ENCODE measurements at regions of chr7 and their contacts with region 1.

Region 1: GRCh38 chr7:22438994-22439393 is 61.0 kb downstream of the STEAP1B start:
- DNase-seq: peak; percentile 45
- ATAC-seq: peak; percentile 75
- H3K4me3 ChIP-seq: no peak overlapping the region
- H3K4me3 Mint-ChIP-seq: no peak overlapping the region
- H3K27ac ChIP-seq: peak overlapping the region; percentile 11 to 30
- H3K27ac Mint-ChIP-seq: peak overlapping the region; percentile 66
- H3K4me1 ChIP-seq: peaks cover 25 to 36% of the 10 kb centered on the region in 2 donors
- H3K4me1 Mint-ChIP-seq: peaks cover 59% of the 10 kb centered on the region
- H3K27me3 ChIP-seq: no peaks in the 10 kb centered on the region
- H3K27me3 Mint-ChIP-seq: no peaks in the 10 kb centered on the region
- CTCF ChIP-seq: no peak

Region 2: GRCh38 chr7:22025968-22026367 is 413.0 kb before region 1 on chr7:
- CTCF ChIA-PET with region 1: no interaction called
- POLR2A ChIA-PET with region 1: no interaction called
- intact Hi-C with region 1: no loop called
- DNase-seq: no peak
- ATAC-seq: no peak
- H3K4me3 ChIP-seq: no peak overlapping the region
- H3K4me3 Mint-ChIP-seq: no peak overlapping the region
- H3K27ac ChIP-seq: no peak overlapping the region
- H3K27ac Mint-ChIP-seq: no peak overlapping the region
- H3K4me1 ChIP-seq: no peaks in the 10 kb centered on the region
- H3K4me1 Mint-ChIP-seq: no peaks in the 10 kb centered on the region
- H3K27me3 ChIP-seq: peaks cover 0 to 2% (median 0%) of the 10 kb centered on the region in 4 experiments
- H3K27me3 Mint-ChIP-seq: peaks cover 12% of the 10 kb centered on the region
- CTCF ChIP-seq: no peak

Region 3: GRCh38 chr7:22278660-22279059 is 160.3 kb before region 1 on chr7:
- CTCF ChIA-PET with region 1: no interaction called
- POLR2A ChIA-PET with region 1: no interaction called
- intact Hi-C with region 1: no loop called
- DNase-seq: no peak
- ATAC-seq: no peak
- H3K4me3 ChIP-seq: no peak overlapping the region
- H3K4me3 Mint-ChIP-seq: no peak overlapping the region
- H3K27ac ChIP-seq: no peak overlapping the region
- H3K27ac Mint-ChIP-seq: no peak overlapping the region
- H3K4me1 ChIP-seq: no peaks in the 10 kb centered on the region
- H3K4me1 Mint-ChIP-seq: no peaks in the 10 kb centered on the region
- H3K27me3 ChIP-seq: no peaks in the 10 kb centered on the region
- H3K27me3 Mint-ChIP-seq: no peaks in the 10 kb centered on the region
- CTCF ChIP-seq: no peak

Region 4: DNA sequence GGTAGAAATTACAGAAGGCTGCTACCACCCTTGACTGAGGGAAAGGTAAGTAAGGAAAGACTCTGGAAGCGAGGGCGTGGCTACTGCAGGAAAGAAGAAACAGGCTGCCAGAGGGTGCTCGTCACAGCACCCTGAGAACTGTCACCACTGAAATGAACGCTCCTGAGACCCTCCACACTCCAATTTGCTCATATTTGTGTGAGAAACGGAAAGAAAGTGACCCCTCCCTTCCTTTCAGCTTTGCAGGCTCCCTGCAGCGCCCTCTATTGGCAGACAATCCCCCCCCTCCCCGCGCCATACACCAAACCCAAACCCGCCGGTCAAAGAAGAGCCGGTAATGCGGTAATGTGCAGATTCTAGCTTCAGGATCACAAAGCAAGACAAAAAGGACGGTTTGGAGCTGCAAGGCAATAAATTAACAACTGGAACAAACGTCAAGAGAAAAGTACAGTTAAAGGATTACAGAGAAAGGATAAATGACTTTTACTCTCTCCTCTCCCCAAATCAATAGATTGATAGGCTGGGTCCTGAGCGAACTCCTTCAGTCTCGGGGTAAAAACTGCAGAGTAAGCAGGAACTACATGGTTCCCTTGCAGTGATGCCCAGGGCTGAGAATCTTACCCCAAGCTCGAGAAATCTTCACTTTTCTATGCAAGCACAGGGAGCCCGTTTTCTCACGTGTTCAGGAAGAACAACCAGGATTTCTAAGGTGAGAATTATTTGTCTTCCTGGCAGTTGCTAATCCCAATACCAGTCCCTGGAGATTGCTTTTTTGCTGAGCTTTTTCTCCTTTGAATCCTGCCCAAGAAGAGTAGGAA is 13.4 kb after region 1 on chr7:
- CTCF ChIA-PET with region 1: interaction called, 13 read pairs
- POLR2A ChIA-PET with region 1: no interaction called
- intact Hi-C with region 1: no loop called
- DNase-seq: peak; percentile 70
- ATAC-seq: peak; percentile 29
- H3K4me3 ChIP-seq: peak overlapping the region in 2 of 5 experiments; percentile 24 to 45
- H3K4me3 Mint-ChIP-seq: peak overlapping the region; percentile 61
- H3K27ac ChIP-seq: no peak overlapping the region
- H3K27ac Mint-ChIP-seq: no peak overlapping the region
- H3K4me1 ChIP-seq: peaks cover 17 to 22% of the 10 kb centered on the region in 2 donors
- H3K4me1 Mint-ChIP-seq: peaks cover 27% of the 10 kb centered on the region
- H3K27me3 ChIP-seq: peaks cover 0 to 7% (median 0%) of the 10 kb centered on the region in 4 experiments
- H3K27me3 Mint-ChIP-seq: peaks cover 4% of the 10 kb centered on the region
- CTCF ChIP-seq: peak; percentile 73

Region 5: DNA sequence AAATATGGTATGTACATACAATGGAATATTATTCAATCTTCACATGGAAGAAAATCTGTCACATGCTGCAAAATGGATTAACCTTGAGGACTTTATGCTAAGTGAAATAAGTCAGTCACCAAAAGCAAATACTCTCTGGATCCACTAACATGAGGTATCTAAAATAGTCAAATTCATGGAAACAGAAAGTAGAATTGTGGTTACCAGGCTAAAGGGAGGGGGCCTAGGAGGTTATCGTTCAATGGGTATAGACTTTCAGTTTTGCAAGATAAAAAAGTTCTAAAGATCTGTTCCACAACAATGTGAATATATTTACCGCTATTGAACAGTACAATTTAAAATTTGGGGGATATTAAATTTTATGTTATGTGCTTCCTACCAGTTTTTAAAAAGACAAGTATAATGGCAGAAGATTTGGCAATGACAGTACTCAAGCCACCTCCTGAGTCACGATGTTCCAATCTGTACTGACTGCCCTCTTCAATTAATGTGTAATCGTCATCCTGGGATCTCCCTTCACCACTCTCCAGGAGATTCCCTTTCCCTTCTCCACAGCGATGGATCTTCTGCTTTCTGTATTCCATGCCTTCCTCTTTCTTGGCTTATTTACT is 255.7 kb after region 1 on chr7:
- CTCF ChIA-PET with region 1: no interaction called
- POLR2A ChIA-PET with region 1: no interaction called
- intact Hi-C with region 1: no loop called
- DNase-seq: peak; percentile 74
- ATAC-seq: peak; percentile 60
- H3K4me3 ChIP-seq: peak overlapping the region in 1 of 5 experiments; percentile 44
- H3K4me3 Mint-ChIP-seq: peak overlapping the region; percentile 71
- H3K27ac ChIP-seq: peak overlapping the region; percentile 52 to 64
- H3K27ac Mint-ChIP-seq: peak overlapping the region; percentile 81
- H3K4me1 ChIP-seq: peaks cover 59 to 66% of the 10 kb centered on the region in 2 donors
- H3K4me1 Mint-ChIP-seq: peaks cover 74% of the 10 kb centered on the region
- H3K27me3 ChIP-seq: no peaks in the 10 kb centered on the region
- H3K27me3 Mint-ChIP-seq: no peaks in the 10 kb centered on the region
- CTCF ChIP-seq: no peak